ENCODE measurements at regions of chr20 and their contacts with region 1.

Region 1: GRCh38 chr20:50575847-50576720 is 65.9 kb downstream of the PTPN1 start:
- DNase-seq: peak; percentile 70 to 80
- ATAC-seq: peak; percentile 92 to 95
- H3K4me3 ChIP-seq: no peak overlapping the region
- H3K27ac ChIP-seq: peak overlapping the region in 1 of 2 experiments; percentile 48; a peak in 1 of 6 replicates
- H3K4me1 ChIP-seq: 0 out of 3 replicates have a peak, but pooled peaks cover 3% of the 10 kb centered on the region
- CTCF ChIP-seq: peak; percentile 85
- EP300 ChIP-seq: no peak
- POLR2A ChIP-seq: no peak
- RAD21 ChIP-seq: peak; percentile 87 to 91

Region 2: GRCh38 chr20:50478162-50479036 is 97.7 kb before region 1 on chr20:
- CTCF ChIA-PET with region 1: interaction called, 28 read pairs
- POLR2A ChIA-PET with region 1: no interaction called
- DNase-seq: peak; percentile 64 to 73
- ATAC-seq: peak; percentile 94 to 99
- H3K4me3 ChIP-seq: no peak overlapping the region
- H3K27ac ChIP-seq: 0 out of 6 replicates have a peak overlapping the region, but pooled peaks of 1 of the 2 experiments have one; percentile 11
- H3K4me1 ChIP-seq: peaks cover 21% of the 10 kb centered on the region
- CTCF ChIP-seq: peak; percentile 45
- EP300 ChIP-seq: no peak
- POLR2A ChIP-seq: no peak
- RAD21 ChIP-seq: peak; percentile 41 to 63; a peak in 3 of 5 replicates

Region 3: DNA sequence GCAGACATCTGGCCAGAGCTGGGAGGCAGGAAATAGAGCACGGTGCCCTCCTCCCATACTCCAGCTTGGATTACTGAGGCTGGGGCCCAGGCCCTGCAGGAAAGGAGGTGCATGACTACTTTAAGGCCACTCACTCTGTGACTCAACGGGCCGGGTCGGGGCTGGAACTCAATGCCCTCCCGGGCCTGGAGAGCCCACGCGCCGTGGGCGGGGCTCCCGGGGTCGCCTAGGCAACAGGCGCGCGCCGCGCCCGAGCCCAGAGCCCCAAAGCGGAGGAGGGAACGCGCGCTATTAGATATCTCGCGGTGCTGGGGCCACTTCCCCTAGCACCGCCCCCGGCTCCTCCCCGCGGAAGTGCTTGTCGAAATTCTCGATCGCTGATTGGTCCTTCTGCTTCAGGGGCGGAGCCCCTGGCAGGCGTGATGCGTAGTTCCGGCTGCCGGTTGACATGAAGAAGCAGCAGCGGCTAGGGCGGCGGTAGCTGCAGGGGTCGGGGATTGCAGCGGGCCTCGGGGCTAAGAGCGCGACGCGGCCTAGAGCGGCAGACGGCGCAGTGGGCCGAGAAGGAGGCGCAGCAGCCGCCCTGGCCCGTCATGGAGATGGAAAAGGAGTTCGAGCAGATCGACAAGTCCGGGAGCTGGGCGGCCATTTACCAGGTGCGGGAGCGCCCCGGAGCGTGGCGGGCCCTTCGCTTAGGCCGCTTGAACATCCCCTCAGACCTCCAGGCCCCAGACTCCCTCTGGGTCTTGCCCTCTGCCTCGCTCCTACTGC is 66.0 kb before region 1 on chr20 and contains the start of gene PTPN1:
- CTCF ChIA-PET with region 1: interaction called, 15 read pairs
- POLR2A ChIA-PET with region 1: no interaction called
- DNase-seq: peak; percentile 89 to 98
- ATAC-seq: peak; percentile 97 to 98
- H3K4me3 ChIP-seq: peak within 1 kb of the TSS; percentile 100
- H3K27ac ChIP-seq: peak within 1 kb of the TSS; percentile 80 to 91
- H3K4me1 ChIP-seq: peaks cover 36% of the 10 kb centered on the region
- CTCF ChIP-seq: no peak
- EP300 ChIP-seq: no peak
- POLR2A ChIP-seq: peak; percentile 87
- RAD21 ChIP-seq: no peak
- polyA plus RNA-seq, gene PTPN1: 21.8 and 23.2 TPM in 2 replicates

Region 4: DNA sequence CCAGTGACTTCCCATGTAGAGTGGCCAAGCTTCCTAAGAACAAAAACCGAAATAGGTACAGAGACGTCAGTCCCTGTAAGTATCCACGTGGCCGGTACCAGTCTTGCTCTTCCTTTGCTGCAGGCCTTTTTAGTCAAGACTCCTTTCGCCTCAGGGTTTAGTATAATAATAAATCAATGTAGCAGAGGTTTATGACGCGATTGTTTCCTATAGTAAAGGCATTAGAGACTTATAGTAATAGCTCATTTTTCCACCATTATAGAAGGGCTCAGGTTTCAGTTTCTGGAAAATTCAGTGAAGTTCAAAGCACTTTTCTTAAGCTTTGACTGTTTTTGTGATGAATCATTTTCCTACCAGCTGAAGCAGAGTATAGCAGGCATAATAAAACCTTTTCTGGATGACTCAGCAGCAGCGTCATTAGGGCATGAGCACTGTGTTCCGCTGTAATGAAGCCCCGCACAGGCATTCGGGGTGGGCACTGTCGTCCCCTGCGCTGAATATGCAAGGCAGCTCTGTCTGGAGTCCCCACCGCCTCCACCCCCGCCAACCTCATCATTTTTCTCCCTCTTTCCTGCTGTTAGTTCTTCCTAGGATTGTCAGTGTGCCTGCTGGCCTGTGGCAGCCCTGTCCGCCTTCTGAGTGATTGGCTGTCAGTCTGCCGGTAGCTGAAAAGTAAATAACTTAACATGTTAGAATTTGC is 14.6 kb before region 1 on chr20:
- CTCF ChIA-PET with region 1: interaction called, 171 read pairs
- POLR2A ChIA-PET with region 1: no interaction called
- DNase-seq: peak; percentile 70 to 75
- ATAC-seq: peak; percentile 88 to 89
- H3K4me3 ChIP-seq: no peak overlapping the region
- H3K27ac ChIP-seq: peak overlapping the region; percentile 63 to 87
- H3K4me1 ChIP-seq: peaks cover 60% of the 10 kb centered on the region
- CTCF ChIP-seq: no peak
- EP300 ChIP-seq: peak in 1 of 2 experiments; percentile 27; a peak in 1 of 5 replicates
- POLR2A ChIP-seq: no peak
- RAD21 ChIP-seq: no peak

Region 5: DNA sequence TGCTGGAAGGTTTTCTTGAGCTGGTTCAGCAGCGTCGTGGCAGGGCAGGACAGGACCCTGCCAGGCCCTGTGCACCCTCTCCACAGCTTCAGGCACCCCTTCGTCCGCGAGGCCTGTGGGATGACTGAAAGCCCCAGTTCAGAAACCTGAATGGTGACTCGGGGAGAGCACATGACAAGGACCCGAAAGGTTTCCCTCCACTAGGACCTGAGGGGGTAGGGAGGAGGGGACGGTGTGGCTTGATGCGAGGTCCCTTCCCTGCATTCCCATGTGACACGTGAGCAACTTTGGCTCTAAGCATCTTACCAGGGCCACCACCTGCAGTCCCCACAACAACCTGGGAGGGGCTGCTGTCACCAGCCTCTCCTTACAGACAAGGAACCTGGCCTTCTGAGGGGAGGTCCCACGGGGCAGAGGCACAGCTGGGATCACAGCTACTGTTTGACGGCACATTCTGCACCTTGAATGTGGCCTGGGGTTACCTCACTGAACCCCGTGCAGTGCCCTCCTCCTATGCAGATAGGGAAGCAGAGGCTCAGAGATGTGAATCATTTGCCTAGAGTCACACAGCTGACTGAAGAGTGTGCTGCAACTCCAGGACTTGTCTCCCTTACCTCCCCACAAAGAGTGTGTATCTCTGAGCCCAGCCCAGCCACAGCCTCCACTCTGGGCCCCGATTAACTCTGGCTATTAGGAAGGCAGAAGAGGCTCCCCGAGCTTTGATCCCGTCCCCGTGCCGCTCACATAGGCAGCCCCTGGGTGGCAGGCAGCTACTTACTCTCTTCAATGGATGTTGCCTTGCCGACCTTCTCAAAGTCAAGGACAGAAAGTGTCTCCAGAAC is 18.7 kb after region 1 on chr20:
- CTCF ChIA-PET with region 1: interaction called, 85 read pairs
- POLR2A ChIA-PET with region 1: no interaction called
- DNase-seq: no peak
- ATAC-seq: peak; percentile 14 to 19; a peak in 4 of 6 replicates
- H3K4me3 ChIP-seq: no peak overlapping the region
- H3K27ac ChIP-seq: no peak overlapping the region
- H3K4me1 ChIP-seq: no peaks in the 10 kb centered on the region
- CTCF ChIP-seq: no peak
- EP300 ChIP-seq: no peak
- POLR2A ChIP-seq: no peak
- RAD21 ChIP-seq: no peak